ENCODE measurements at regions of chr12 and their contacts with region 1.

Region 1: DNA sequence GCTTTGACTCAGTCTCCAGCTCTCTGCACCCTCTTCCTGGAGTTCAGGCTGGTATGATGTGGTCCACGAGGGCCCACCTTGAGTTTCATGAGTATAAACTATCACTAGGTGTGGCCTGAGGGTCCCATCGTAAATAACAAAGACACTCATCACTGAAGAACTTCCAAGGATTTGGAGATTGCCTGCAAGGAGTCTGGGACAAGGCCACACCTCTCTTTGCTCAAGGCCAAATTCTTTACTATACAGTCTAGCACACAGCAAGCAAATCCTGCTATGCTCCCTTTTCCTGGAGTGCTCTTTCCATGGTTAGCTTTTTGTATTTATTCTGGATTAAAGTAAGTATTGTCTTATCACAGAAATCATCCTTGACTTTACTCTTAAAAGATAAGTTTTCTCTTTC is 271.9 kb downstream of the SLC16A7 start:
- DNase-seq: no peak
- H3K4me3 ChIP-seq: no peak overlapping the region
- H3K27ac ChIP-seq: no peak overlapping the region
- H3K4me1 ChIP-seq: no peaks in the 10 kb centered on the region
- H3K27me3 ChIP-seq: no peaks in the 10 kb centered on the region
- CTCF ChIP-seq: no peak
- EP300 ChIP-seq: no peak
- POLR2A ChIP-seq: no peak

Region 2: DNA sequence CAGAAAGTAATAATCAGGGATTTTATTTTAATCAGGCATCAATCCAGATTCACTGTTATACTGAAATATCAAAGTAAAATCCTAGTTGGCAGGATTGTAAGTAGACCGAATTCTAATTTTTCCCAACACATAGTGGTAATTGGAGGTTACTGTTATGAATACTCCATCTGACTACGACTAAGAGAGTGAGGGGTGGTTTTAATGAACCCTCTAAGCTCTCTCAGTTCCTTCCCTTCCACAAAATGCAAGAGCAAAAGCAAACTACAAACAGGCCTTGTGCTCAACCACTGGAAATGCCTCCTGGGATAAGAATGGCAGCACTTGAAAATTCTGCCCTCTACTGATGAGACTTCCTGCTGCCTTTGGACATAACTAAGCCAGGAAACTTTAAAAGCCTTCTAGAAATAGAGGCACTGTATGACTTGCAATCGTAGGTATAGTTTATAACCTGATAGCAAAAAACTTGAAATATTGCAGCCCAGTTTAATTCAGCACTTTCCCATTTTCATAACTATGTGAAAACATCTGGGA is 87.0 kb before region 1 on chr12:
- intact Hi-C with region 1: no loop called
- DNase-seq: no peak
- H3K4me3 ChIP-seq: no peak overlapping the region
- H3K27ac ChIP-seq: no peak overlapping the region
- H3K4me1 ChIP-seq: no peaks in the 10 kb centered on the region
- H3K27me3 ChIP-seq: no peaks in the 10 kb centered on the region
- CTCF ChIP-seq: no peak
- EP300 ChIP-seq: no peak
- POLR2A ChIP-seq: no peak

Region 3: GRCh38 chr12:59911516-59911915 is 43.8 kb after region 1 on chr12:
- intact Hi-C with region 1: loop called in 1 of 4 experiments (anchors 1 kb)
- DNase-seq: no peak
- H3K4me3 ChIP-seq: no peak overlapping the region
- H3K27ac ChIP-seq: no peak overlapping the region
- H3K4me1 ChIP-seq: no peaks in the 10 kb centered on the region
- H3K27me3 ChIP-seq: no peaks in the 10 kb centered on the region
- CTCF ChIP-seq: no peak
- EP300 ChIP-seq: no peak
- POLR2A ChIP-seq: no peak